ENCODE measurements at regions of chr6 and their contacts with region 1.

Region 1: DNA sequence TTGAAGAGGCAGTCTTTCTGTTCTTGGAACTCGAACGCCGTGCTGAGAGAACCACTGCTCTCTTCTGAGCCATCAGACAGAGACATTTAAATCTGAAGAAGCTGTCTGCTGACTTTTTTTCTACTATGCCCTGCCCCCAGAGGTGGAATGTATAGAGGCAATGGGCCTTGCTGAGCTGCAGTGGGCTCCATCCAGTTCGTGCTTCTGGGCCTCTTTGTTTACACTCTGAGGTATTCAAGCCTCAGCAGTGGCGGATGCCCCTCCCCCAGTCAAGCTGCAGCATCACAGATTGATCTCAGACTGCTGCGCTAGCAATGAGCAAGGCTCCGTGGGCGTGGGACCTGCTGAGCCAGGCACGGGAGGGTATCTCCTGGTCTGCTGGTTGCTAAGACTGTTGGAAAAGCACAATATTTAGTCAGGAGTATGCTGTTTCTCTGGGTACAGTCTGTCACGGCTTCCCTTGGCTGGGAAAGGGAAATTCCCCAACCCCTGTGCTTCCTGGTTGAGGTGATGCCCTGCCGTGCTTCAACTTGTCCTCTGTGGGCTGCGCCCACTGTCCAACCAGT is 526.8 kb downstream of the CD109 start:
- DNase-seq: no peak
- H3K4me3 ChIP-seq: no peak overlapping the region
- H3K27ac ChIP-seq: no peak overlapping the region
- H3K4me1 ChIP-seq: no peaks in the 10 kb centered on the region
- H3K27me3 ChIP-seq: no peaks in the 10 kb centered on the region
- CTCF ChIP-seq: no peak
- POLR2A ChIP-seq: no peak

Region 2: GRCh38 chr6:73062837-73063236 is 1160.0 kb before region 1 on chr6:
- CTCF ChIA-PET with region 1: no interaction called
- POLR2A ChIA-PET with region 1: no interaction called
- dilution Hi-C with region 1: no loop called
- intact Hi-C with region 1: loop called (anchors 10 kb)
- DNase-seq: no peak
- H3K4me3 ChIP-seq: no peak overlapping the region
- H3K27ac ChIP-seq: no peak overlapping the region
- H3K4me1 ChIP-seq: no peaks in the 10 kb centered on the region
- H3K27me3 ChIP-seq: no peaks in the 10 kb centered on the region
- CTCF ChIP-seq: no peak
- POLR2A ChIP-seq: no peak

Region 3: DNA sequence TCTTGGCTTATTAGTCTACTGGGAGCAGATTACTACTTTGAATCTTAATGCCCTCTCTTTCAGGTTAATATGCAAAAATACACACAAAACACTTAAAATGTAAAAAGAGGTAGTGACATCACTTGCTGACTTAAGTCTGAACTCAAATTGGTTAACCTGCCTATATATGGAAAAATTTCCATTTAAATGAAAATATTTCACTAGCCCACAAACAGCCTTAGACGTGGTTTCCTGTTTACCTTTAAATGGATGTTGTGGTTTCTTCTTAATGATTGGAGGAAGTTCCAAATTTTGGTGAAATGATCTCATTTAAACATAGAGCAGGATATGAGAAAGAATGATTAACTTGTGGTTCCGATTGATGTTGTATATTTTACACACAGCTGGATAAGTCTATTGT is 26.8 kb after region 1 on chr6:
- CTCF ChIA-PET with region 1: no interaction called
- POLR2A ChIA-PET with region 1: no interaction called
- dilution Hi-C with region 1: no loop called
- intact Hi-C with region 1: no loop called
- DNase-seq: peak; percentile 37
- H3K4me3 ChIP-seq: no peak overlapping the region
- H3K27ac ChIP-seq: peak overlapping the region; percentile 69
- H3K4me1 ChIP-seq: peaks cover 25% of the 10 kb centered on the region
- H3K27me3 ChIP-seq: no peaks in the 10 kb centered on the region
- CTCF ChIP-seq: no peak
- POLR2A ChIP-seq: no peak

Region 4: GRCh38 chr6:74598473-74599393 is 375.9 kb after region 1 on chr6:
- CTCF ChIA-PET with region 1: no interaction called
- POLR2A ChIA-PET with region 1: no interaction called
- dilution Hi-C with region 1: no loop called
- intact Hi-C with region 1: no loop called
- DNase-seq: peak; percentile 15
- H3K4me3 ChIP-seq: no peak overlapping the region
- H3K27ac ChIP-seq: no peak overlapping the region
- H3K4me1 ChIP-seq: peaks cover 16% of the 10 kb centered on the region
- H3K27me3 ChIP-seq: no peaks in the 10 kb centered on the region
- CTCF ChIP-seq: no peak
- POLR2A ChIP-seq: no peak